PC-9 (cell line): ENCODE measurements at regions of chr12 and their contacts with region 1.

Region 1: DNA sequence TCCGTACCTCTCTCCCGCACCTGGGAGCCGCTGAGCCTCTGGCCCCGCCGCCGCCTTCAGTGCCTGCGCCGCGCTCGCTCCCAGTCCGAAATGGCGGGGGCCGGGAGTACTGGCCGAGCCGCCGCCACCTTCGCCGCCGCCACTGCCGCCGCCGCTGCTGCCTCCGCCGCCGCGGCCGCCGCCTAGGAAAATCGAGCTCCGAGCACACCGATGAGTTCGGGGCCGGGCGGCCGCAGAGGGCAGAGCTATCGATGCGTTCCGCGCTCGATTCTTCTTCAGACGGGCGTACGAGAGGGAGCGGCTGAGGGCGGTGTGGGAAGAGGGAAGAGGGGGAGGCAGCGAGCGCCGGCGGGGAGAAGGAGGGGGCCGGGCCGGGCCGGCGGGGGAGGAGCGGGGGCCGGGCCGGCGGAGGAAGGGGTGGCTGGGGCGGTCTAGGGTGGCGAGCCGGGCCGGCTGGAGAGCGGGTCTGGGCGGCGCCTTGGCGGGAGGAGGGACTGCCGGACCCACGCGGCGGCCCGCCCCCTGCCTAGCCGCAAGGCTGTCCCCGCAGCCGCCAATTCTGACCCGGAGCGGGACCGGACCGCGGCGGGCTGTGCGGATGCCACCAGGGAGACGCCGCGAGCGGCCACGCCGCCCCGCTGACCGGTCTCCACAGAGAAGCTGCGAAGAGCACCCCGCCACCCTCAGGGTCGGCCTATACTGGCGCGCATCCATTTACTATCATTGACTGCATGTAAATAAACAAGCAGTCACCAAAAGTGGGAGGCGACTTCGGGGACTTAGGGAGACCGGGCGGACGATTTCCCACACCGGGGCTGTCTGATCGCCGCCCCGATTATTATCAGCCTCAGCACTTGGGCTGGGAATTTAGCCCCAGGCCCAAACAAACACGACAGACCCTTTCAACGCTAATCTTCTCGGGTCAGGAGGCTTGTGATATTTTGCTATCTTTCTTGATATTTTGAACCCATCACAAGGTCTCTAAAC is at the start of gene KRAS:
- DNase-seq: peak; percentile 85 to 99
- H3K4me3 ChIP-seq: peak within 1 kb of the TSS; percentile 96
- H3K27ac ChIP-seq: peak within 1 kb of the TSS; percentile 14; the same call in 1 of the 2 replicates
- H3K4me1 ChIP-seq: peaks cover 18% of the 10 kb centered on the region
- H3K27me3 ChIP-seq: no peaks in the 10 kb centered on the region
- CTCF ChIP-seq: no peak
- total RNA-seq, gene KRAS: 34.0 and 40.0 TPM in 2 replicates

Region 2: DNA sequence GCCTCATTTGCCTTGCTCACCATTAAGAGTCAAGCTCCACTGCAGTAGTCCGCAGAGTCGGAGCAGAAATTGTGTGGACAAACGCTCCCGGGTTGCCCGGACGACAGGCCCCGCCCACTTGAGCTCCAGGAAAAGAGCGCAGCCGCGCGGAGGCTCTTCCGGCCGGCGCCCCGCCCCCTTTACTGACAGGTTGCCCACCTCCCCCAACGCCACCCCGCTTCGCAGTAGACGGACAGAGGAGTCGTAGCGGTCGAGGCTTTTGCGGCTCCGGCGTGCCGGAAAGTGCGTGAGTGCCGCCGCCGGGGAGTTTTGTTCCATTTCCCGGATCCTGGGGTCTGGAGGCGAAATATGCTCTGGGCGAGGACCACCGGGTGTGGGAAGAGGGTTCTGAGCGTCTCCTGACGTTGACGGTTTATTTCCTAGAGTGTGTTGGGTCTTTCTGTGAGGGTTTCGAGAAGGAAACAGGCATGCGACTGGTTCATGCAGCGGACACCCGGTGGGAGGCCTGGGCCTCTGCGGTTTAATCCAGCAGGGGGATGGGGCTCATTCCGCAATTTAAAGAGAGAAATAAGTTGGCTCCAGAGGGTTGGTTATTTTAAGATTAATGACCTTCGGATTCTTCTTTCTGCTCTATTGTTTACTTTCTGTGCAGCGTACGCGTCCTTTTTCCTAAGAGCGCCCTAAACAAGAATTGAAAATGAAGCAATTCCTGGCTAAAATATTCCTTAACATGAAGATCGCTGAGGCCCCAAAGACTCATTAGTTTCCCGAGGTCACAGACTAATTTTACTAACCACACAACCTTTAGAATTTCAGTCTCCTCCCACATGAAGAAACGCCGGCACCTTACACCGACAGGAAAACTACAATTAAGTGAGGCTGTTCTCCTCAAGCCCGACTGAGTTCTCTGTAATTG is 55.7 kb before region 1 on chr12 and contains the starts of genes DNAI7 and ETFRF1:
- CTCF ChIA-PET with region 1: no interaction called
- POLR2A ChIA-PET with region 1: interaction called, 3 read pairs
- intact Hi-C with region 1: loop called (anchors 2 kb)
- DNase-seq: peak; percentile 87 to 99
- H3K4me3 ChIP-seq: peak within 1 kb of the TSS; percentile 84
- H3K27ac ChIP-seq: peak within 1 kb of the TSS; percentile 66
- H3K4me1 ChIP-seq: peaks cover 19% of the 10 kb centered on the region; the same call in 1 of the 2 replicates
- H3K27me3 ChIP-seq: no peaks in the 10 kb centered on the region
- CTCF ChIP-seq: no peak
- total RNA-seq, gene DNAI7: 2.4 and 2.9 TPM in 2 replicates
- total RNA-seq, gene ETFRF1: 11.6 and 15.9 TPM in 2 replicates

Region 3: DNA sequence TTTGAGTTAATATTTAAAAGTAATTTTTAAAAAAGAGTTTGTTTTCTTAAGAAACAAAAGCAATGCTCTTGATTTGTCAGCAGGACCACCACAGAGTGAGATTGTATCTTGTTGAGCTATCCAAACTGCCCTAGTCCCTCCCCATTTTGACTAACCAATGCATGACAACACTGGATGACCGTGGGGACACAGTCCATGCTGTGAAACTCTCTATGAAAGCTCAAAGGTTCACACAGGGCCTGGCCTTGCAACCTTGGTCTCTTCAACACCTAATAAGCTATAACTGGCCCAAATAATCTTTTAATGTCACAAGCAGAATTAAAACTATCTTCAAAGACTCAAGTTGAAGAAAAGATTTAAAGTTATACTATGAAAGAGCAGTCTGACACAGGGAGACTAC is 42.5 kb before region 1 on chr12:
- CTCF ChIA-PET with region 1: no interaction called
- POLR2A ChIA-PET with region 1: no interaction called
- intact Hi-C with region 1: loop called (anchors 5 kb)
- DNase-seq: no peak
- H3K4me3 ChIP-seq: no peak overlapping the region
- H3K27ac ChIP-seq: no peak overlapping the region
- H3K4me1 ChIP-seq: no peaks in the 10 kb centered on the region
- H3K27me3 ChIP-seq: no peaks in the 10 kb centered on the region
- CTCF ChIP-seq: no peak

Region 4: DNA sequence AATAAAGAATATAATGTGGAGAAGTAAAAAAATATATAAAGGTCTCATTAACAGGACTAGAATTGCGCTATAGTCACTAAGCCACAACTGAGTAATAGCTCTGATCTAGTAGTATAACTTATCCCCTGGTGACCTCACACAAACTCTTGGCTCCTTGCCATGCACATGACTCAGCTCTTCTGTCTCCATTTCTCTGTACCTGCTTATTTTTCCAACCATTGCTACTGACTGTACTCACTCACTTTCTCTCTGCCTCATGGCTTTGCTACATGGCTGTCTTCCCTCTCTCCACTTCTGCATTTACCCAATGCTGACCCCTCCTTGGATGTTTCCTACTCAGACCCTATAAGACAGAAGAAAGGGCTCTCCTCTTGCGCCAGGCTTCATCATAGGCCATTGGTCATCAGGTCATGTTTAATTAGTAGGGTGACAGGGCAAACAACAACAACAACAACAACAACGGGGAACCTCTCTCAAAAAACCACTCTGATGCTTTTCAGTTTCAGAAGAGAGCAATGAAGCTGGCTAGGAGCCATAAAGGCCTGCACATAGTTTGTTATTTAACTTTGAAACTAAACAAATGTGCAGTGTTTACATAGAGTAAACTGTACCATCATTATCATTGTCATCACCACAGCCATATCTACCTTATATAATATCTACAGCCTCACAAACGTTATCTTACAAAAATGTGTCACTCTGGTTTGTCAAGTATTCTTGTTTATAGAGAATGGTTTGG is 25.3 kb after region 1 on chr12:
- CTCF ChIA-PET with region 1: interaction called, 3 read pairs
- POLR2A ChIA-PET with region 1: interaction called, 10 read pairs
- intact Hi-C with region 1: no loop called
- DNase-seq: peak; percentile 60 to 79
- H3K4me3 ChIP-seq: no peak overlapping the region
- H3K27ac ChIP-seq: peak overlapping the region; percentile 54
- H3K4me1 ChIP-seq: peaks cover 13% of the 10 kb centered on the region
- H3K27me3 ChIP-seq: no peaks in the 10 kb centered on the region
- CTCF ChIP-seq: no peak

Region 5: GRCh38 chr12:25284024-25284423 is 33.0 kb after region 1 on chr12:
- CTCF ChIA-PET with region 1: no interaction called
- POLR2A ChIA-PET with region 1: interaction called, 23 read pairs
- intact Hi-C with region 1: no loop called
- DNase-seq: no peak
- H3K4me3 ChIP-seq: no peak overlapping the region
- H3K27ac ChIP-seq: no peak overlapping the region
- H3K4me1 ChIP-seq: no peaks in the 10 kb centered on the region
- H3K27me3 ChIP-seq: no peaks in the 10 kb centered on the region
- CTCF ChIP-seq: no peak

Region 6: GRCh38 chr12:25308756-25309155 is 57.7 kb after region 1 on chr12:
- CTCF ChIA-PET with region 1: no interaction called
- POLR2A ChIA-PET with region 1: no interaction called
- intact Hi-C with region 1: no loop called
- DNase-seq: no peak
- H3K4me3 ChIP-seq: no peak overlapping the region
- H3K27ac ChIP-seq: no peak overlapping the region
- H3K4me1 ChIP-seq: no peaks in the 10 kb centered on the region
- H3K27me3 ChIP-seq: no peaks in the 10 kb centered on the region
- CTCF ChIP-seq: no peak

Region 7: DNA sequence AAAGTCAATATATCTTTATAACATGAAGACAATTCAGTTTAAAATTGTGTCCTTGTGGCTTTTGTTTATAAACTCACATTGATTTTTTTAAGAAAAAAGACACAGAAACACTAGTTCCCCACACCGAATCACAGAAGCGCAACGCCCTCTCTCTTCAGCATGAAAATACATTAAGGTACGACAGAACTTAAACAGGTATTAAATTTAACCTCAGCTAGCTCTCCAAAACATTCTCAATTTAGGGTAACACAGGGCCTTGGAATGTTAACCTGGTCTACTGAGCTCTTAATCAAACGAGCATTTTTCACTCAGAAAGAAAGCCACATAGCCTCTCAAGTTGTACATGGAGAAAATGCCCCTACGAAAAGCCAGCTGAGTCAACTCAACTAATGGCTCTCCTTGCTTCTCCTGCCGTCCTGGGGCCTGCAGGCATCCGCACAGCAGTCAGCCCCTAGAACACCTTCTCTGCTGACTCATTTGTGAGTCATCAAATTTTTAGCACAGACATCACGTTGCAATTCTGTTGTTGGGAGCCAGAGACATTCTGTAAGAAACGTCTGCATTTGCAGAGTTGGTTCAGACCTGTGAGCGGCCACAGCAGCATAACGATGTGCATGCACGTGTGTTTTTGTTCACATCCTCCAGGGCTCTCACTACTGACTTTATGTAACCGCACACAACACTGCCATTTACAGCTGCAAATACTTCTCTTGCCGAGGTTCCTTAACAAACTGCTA is 1440.4 kb after region 1 on chr12:
- CTCF ChIA-PET with region 1: no interaction called
- POLR2A ChIA-PET with region 1: no interaction called
- intact Hi-C with region 1: loop called (anchors 5 kb)
- DNase-seq: peak; percentile 69 to 88
- H3K4me3 ChIP-seq: peak overlapping the region; percentile 6; the same call in 1 of the 2 replicates
- H3K27ac ChIP-seq: peak overlapping the region; percentile 44
- H3K4me1 ChIP-seq: peaks cover 16% of the 10 kb centered on the region
- H3K27me3 ChIP-seq: no peaks in the 10 kb centered on the region
- CTCF ChIP-seq: no peak